Esophagus muscularis mucosa (tissue), 4 donors: ENCODE measurements at regions of chr10 and their contacts with region 1.

Region 1: GRCh38 chr10:84264611-84265141 is 19.8 kb downstream of the RGR start:
- DNase-seq: no peak
- H3K4me3 ChIP-seq: no peak overlapping the region
- H3K27ac ChIP-seq: no peak overlapping the region
- H3K4me1 ChIP-seq: peaks cover 0 to 5% (median 4%) of the 10 kb centered on the region in 4 donors
- H3K27me3 ChIP-seq: peaks cover 0 to 45% (median 0%) of the 10 kb centered on the region in 4 donors
- CTCF ChIP-seq: peak; percentile 86 to 97 (median 92)
- EP300 ChIP-seq: no peak
- POLR2A ChIP-seq: no peak

Region 2: DNA sequence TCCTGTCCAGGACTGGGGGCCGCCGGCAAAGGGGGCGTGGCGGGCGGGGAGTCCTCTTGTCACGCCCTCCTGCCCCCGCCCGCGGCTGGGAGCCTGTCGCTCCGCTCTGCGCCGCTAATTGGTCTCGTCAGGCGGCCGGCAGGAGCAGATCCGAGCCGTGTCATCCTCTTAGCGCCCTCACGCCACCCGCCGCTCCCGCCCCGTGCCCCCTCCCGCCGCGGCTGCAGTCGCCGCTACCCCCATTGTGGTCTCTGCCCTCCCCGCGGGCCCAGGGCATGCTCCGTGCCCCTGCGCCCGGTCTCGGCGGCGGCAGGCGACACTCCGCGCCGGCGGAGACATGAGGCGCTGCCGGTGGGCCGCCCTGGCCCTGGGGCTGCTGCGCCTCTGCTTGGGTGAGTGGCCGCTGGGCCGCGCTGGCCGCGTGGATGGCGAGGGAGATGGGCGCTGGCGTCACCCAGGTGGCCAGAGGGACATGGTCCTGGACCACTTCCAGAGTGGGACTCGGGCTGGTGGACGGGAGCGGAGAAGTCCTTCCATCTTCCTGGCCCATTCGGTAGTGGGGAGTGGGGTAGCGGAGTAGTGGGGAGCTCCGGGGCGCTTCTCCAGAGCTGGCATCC is 70.1 kb before region 1 on chr10 and contains the start of gene CDHR1:
- intact Hi-C with region 1: no loop called
- DNase-seq: no peak
- H3K4me3 ChIP-seq: peak within 1 kb of the TSS; percentile 51 to 56 (median 52)
- H3K27ac ChIP-seq: no peak within 1 kb of the TSS
- H3K4me1 ChIP-seq: peaks cover 6 to 19% (median 15%) of the 10 kb centered on the region in 4 donors
- H3K27me3 ChIP-seq: peaks cover 0 to 80% (median 23%) of the 10 kb centered on the region in 4 donors
- CTCF ChIP-seq: no peak
- EP300 ChIP-seq: no peak
- POLR2A ChIP-seq: no peak
- total RNA-seq, gene CDHR1: under 0.01 to 0.17 (median 0.06) TPM in 3 of 4 donors, not detected in the other

Region 3: GRCh38 chr10:84352251-84352842 is 87.7 kb after region 1 on chr10:
- intact Hi-C with region 1: loop called (anchors 5 kb)
- DNase-seq: no peak
- H3K4me3 ChIP-seq: no peak overlapping the region
- H3K27ac ChIP-seq: no peak overlapping the region
- H3K4me1 ChIP-seq: peaks cover 24 to 64% (median 55%) of the 10 kb centered on the region in 4 donors
- H3K27me3 ChIP-seq: no peaks in the 10 kb centered on the region
- CTCF ChIP-seq: peak; percentile 56 to 80 (median 59)
- EP300 ChIP-seq: no peak
- POLR2A ChIP-seq: no peak

Region 4: DNA sequence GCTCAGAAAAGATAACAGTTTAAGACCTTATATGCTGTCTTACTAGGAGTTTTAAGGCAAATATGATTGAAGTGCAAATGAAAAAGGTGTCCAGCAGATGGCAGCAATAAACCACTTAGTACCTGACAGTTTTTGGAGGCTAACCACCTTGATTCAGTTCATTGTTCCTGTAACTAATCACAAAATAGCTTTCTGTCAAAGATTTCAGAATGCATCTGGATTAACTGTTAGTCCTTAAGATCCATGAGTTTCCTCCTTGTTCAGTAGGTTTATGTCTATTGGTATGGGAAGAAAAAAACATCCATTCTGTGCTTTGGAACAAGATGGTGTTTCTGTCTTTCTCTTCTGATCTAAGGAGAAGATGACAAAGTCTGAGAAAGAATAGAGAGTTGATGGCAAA is 110.3 kb after region 1 on chr10:
- intact Hi-C with region 1: loop called (anchors 5 kb)
- DNase-seq: no peak
- H3K4me3 ChIP-seq: no peak overlapping the region
- H3K27ac ChIP-seq: no peak overlapping the region
- H3K4me1 ChIP-seq: no peaks in the 10 kb centered on the region
- H3K27me3 ChIP-seq: no peaks in the 10 kb centered on the region
- CTCF ChIP-seq: peak; percentile 59 to 74 (median 73)
- EP300 ChIP-seq: no peak
- POLR2A ChIP-seq: no peak

Region 5: DNA sequence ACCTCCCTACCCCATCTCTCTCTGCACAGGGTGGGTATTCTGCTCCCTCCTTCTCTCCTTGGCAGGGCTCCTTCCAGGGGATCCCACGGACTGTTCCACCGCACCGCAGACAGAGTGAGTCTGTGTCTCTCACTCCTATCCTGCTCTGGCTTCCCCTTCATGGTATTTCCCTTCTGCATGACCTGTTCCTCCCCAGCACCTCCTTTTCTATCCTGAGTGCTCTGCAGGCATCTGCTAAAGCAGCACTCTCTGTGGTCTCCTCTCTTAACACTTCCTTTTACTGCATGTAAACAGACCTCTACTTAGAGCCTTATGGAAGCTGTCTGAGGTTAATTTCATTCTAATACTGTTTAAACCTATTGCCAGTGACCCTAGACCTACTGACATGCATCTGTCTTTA is 235.2 kb after region 1 on chr10:
- intact Hi-C with region 1: no loop called
- DNase-seq: no peak
- H3K4me3 ChIP-seq: no peak overlapping the region
- H3K27ac ChIP-seq: no peak overlapping the region
- H3K4me1 ChIP-seq: peaks cover 0 to 1% (median 0%) of the 10 kb centered on the region in 4 donors
- H3K27me3 ChIP-seq: no peaks in the 10 kb centered on the region
- CTCF ChIP-seq: no peak
- EP300 ChIP-seq: no peak
- POLR2A ChIP-seq: no peak

Region 6: DNA sequence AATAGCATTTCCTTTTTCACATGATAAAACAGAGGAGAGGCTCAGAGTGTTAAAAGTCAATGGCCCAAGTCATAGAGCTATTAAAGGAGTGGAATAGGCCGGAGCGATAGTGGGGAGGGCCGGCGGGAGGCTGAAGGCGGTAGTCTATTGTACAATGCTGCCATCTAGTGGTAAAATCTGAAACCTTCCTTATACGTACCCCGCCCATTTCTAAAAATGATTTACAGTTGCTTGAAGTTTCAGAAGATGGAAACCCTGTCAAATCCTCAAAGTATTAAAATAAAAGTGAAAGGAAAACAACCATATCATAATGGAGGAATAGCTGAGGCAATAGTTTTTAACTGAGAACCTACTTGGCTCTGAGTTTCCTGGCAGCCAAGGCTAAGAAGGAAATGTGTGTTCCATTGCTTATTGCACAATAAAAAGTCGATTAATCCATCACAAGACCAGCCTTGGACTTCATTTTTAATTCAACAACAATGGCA is 272.8 kb after region 1 on chr10:
- intact Hi-C with region 1: loop called (anchors 2 kb)
- DNase-seq: no peak
- H3K4me3 ChIP-seq: no peak overlapping the region
- H3K27ac ChIP-seq: no peak overlapping the region
- H3K4me1 ChIP-seq: peaks cover 0 to 12% (median 11%) of the 10 kb centered on the region in 4 donors
- H3K27me3 ChIP-seq: peaks cover 0 to 37% (median 2%) of the 10 kb centered on the region in 4 donors
- CTCF ChIP-seq: peak; percentile 83 to 91 (median 83)
- EP300 ChIP-seq: no peak
- POLR2A ChIP-seq: no peak